ENCODE measurements at regions of chr11 and their contacts with region 1.

Region 1: DNA sequence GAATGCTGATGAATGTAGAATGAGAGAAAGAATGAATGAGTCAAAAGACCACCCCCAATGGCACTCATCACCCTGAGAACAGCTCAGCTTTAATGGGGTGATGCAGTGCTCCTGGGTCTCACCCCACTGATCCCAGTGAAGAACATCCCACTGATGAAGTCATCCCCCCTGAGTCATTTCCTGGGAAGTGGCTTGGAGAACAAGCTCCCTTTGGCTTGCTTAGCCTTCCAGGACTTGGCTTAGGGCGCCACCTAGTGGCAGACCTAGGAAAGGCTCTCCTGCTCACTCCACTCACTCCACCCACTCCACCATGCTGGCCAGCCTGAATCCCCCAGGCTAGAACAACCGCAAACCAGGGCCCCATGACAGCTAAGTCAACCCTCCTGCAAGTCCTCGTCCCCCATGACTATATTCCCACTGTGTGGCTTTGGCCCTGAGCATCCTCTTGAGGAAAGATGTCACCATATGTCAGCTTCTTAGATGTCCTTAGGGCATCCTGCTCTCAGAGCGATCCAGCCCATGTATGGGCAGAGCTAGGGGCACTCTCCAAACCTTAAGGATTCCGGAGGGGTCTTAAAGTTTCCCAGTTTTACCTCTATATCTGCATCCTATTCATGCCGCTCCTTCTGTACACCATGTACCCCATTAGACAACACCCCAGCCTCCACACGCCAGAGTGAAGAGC is 17.8 kb upstream of the TMPRSS13 start:
- DNase-seq: peak; percentile 87 to 90 (median 88)
- ATAC-seq: peak; percentile 92
- H3K4me3 ChIP-seq: no peak overlapping the region
- H3K27ac ChIP-seq: no peak overlapping the region
- H3K4me1 ChIP-seq: no peaks in the 10 kb centered on the region
- H3K27me3 ChIP-seq: no peaks in the 10 kb centered on the region
- CTCF ChIP-seq: peak; percentile 90 to 97 (median 96)
- POLR2A ChIP-seq: no peak

Region 2: DNA sequence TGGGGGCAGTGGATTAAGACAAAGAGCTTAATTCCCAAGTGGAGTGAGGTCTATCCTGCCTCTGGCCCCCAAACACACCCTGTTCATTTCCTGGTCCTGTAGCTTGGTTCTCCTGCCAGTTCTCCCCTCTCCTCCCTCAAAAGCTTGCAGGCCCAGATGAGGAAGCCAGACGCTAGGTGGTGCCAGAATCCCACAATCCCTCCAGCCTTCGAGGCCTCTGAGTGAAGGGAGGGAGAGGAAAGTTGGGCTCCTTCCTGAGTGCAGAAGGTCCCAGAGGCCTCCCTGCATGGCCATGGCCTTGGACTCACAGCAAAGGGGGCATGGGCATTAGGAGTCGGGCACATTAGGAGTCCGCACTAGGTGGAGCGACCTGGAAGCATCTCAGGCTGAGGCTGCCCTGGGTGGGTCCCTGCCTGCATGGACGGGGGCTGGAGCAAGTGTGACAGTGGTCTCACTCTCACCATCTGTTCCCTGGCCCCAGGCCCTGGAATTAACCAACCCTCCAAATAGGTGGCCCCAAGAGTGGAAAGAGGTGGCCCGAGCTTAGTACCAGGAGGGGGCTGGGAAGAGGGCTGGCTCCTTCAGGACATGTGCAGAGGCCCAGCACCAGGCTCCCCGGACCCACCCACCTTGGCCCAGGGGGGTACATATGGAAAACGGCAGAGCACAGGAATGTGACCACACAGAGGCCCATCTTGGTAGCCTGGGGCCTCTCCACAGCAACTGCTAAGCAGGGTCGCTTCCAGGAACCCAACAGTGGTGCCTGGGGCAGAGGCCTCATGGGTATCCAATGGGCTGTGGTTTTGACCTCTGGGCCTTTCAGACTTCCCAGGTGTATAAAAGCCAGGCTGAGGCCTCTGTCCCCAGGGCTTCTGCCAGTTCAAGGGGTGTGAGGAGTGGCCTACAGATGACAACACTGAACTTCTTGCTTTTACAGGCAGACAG is 127.6 kb before region 1 on chr11:
- intact Hi-C with region 1: loop called (anchors 5 kb)
- DNase-seq: peak; percentile 64 to 81 (median 78)
- ATAC-seq: peak; percentile 8
- H3K4me3 ChIP-seq: no peak overlapping the region
- H3K27ac ChIP-seq: peak overlapping the region; percentile 10 to 88 (median 86)
- H3K4me1 ChIP-seq: peaks cover 64% of the 10 kb centered on the region
- H3K27me3 ChIP-seq: no peaks in the 10 kb centered on the region
- CTCF ChIP-seq: peak in 5 of 7 experiments; percentile 39 to 73 (median 67)
- POLR2A ChIP-seq: no peak

Region 3: DNA sequence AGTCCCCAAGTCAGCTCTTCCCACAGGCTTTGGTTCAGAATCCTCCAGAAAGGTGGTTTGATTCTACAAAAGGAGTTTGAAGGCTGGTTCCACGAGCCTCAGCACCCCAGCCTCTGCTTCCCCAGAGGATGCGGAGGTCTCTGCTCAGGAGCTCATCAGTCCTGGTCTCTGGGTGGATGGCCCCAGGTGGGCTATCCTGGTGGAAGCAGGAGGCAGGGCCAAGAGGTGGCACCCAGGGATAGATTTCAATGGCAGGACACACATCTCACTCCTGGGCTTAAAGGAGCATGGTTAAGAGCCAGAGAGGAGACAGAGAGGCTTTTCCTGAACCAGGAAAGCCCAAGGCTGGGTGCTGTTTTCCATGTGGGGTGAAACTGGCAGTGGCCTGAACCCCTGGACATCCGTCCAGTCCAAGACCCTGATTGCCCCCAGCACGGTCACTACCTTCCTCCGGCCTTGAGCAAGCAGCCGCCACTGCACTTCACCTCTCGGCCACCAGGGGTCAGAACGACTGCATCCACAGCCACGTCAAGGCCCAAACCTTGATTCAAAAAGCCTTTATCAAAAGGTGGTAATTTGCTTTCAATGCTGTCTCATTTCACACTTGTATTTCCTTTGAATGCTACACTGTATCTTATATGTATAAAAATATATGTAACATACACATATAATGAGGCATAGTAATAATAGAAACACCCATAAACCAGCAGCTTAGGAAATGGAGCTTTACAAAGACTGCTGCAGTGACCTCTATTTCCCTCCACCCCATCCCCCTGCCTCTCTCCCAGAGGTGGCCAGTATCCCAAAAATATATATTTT is 103.1 kb before region 1 on chr11:
- intact Hi-C with region 1: loop called (anchors 5 kb)
- DNase-seq: peak; percentile 78 to 88 (median 84)
- ATAC-seq: peak; percentile 74
- H3K4me3 ChIP-seq: no peak overlapping the region
- H3K27ac ChIP-seq: no peak overlapping the region
- H3K4me1 ChIP-seq: peaks cover 5% of the 10 kb centered on the region
- H3K27me3 ChIP-seq: no peaks in the 10 kb centered on the region
- CTCF ChIP-seq: peak; percentile 88 to 99 (median 94)
- POLR2A ChIP-seq: no peak

Region 4: DNA sequence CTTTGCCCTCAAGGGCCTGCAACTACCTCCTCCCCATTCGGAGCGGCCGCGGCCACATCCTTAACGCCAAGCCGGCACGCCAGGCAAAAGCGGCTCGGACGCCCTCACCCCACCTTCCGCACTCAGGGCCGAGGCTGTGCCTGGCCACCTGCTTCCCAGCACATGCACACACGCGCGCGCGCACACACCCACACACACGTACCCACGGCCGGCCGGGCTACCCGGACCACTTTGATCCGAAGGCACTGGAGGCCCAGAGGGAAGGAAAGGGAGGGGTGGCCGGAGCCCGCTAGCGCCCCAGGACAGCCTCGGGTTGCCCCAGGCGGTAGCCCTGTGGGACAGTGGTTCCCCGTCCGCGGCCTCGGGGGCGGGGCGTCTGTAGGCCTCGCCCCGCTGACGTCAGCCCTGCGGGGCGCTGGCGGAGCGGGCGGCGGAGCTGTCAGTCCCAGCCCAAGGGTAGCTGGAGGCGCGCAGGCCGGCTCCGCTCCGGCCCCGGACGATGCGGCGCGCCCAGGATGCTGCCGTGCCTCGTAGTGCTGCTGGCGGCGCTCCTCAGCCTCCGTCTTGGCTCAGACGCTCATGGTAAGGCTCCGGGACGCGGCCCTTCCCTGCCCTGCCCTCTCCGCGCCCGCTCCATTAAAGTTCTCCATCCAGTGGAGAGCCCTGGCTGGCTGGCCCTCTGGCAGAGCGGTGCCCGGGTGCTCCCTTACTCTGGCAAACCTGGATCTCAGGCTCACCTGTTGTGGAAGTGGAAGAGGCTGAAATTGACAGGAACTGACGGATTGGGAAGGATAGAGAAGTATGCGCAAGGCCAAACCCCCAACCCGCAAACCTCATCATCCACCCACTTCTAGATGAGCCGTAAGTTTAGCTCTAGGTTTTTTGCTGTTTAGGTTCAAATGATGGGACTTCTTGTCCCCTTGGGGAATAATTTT is 39.2 kb after region 1 on chr11 and contains the start of gene IL10RA:
- intact Hi-C with region 1: no loop called
- DNase-seq: peak; percentile 72 to 84 (median 80)
- ATAC-seq: peak; percentile 94
- H3K4me3 ChIP-seq: peak within 1 kb of the TSS; percentile 1 to 12
- H3K27ac ChIP-seq: peak within 1 kb of the TSS in 3 of 4 donors; percentile 33 to 61 (median 45)
- H3K4me1 ChIP-seq: peaks cover 11% of the 10 kb centered on the region
- H3K27me3 ChIP-seq: no peaks in the 10 kb centered on the region
- CTCF ChIP-seq: no peak
- POLR2A ChIP-seq: peak; percentile 13 to 75 (median 45)
- total RNA-seq, gene IL10RA: 7.3 to 10.2 TPM

Region 5: GRCh38 chr11:118051611-118052461 is 104.9 kb after region 1 on chr11:
- intact Hi-C with region 1: loop called (anchors 10 kb)
- DNase-seq: no peak
- ATAC-seq: no peak
- H3K4me3 ChIP-seq: no peak overlapping the region
- H3K27ac ChIP-seq: no peak overlapping the region
- H3K4me1 ChIP-seq: no peaks in the 10 kb centered on the region
- H3K27me3 ChIP-seq: no peaks in the 10 kb centered on the region
- CTCF ChIP-seq: no peak
- POLR2A ChIP-seq: no peak

Measured in body of pancreas (tissue), 4 donors.